Naive thymus-derived CD4-positive, alpha-beta T cell (primary cell): ENCODE measurements at regions of chr9 and their contacts with region 1.

Region 1: DNA sequence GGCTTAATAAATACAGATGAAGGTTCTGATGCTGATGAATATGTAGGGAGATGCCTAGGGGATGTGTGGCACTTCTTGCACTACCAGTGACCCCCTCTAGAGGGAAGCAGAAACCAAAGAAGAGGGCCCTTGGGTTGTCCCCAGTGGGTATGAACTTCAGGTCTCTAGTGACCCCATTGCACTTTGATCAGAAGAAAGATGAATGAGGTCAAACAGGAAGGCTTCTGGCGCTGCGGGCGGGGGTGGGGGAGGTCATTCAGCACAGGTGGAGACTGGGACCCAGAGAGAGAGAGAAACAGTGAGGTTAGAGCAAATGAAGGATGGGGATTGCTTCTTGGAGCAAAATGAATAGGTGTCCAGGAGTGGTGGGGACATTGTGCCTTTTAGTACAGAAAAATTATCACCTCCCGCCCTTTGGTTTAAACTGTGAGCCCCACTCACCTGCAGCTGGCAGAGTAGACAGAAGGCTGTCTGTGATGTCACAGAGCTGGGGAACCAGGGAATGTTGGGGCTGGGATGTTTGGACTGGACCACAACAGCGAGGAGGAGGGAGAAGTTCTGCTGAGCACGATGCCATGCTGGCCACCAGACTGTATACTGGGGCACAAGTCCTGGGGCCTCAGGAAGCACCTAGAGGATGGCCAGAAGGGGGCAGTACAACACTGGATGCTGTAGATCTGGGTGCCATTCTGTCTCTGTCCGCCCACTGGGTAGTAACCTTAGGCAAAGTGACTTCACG is at the start of gene TEX48:
- DNase-seq: peak; percentile 29 to 74 (median 62)
- ATAC-seq: peak; percentile 95
- H3K4me3 ChIP-seq: no peak within 1 kb of the TSS
- H3K4me3 Mint-ChIP-seq: peak within 1 kb of the TSS in 1 of 10 donors; percentile 56
- H3K27ac ChIP-seq: no peak within 1 kb of the TSS
- H3K27ac Mint-ChIP-seq: peak within 1 kb of the TSS in 1 of 9 donors; percentile 95
- H3K4me1 ChIP-seq: peaks cover 5 to 11% of the 10 kb centered on the region in 2 donors
- H3K4me1 Mint-ChIP-seq: peaks cover 0 to 58% (median 7%) of the 10 kb centered on the region in 7 donors
- H3K27me3 ChIP-seq: peaks cover 0 to 4% of the 10 kb centered on the region in 2 donors
- H3K27me3 Mint-ChIP-seq: peaks cover 0 to 20% (median 14%) of the 10 kb centered on the region in 5 donors
- total RNA-seq, gene TEX48: 0.85 TPM in 1 of 5 experiments, not detected in the others

Region 2: GRCh38 chr9:114629563-114630090 is 52.1 kb before region 1 on chr9:
- CTCF ChIA-PET with region 1: no interaction called
- POLR2A ChIA-PET with region 1: no interaction called
- intact Hi-C with region 1: no loop called
- DNase-seq: no peak
- ATAC-seq: no peak
- H3K4me3 ChIP-seq: no peak overlapping the region
- H3K4me3 Mint-ChIP-seq: no peak overlapping the region
- H3K27ac ChIP-seq: no peak overlapping the region
- H3K27ac Mint-ChIP-seq: peak overlapping the region in 1 of 9 donors; percentile 53
- H3K4me1 ChIP-seq: no peaks in the 10 kb centered on the region
- H3K4me1 Mint-ChIP-seq: peaks cover 0 to 5% (median 0%) of the 10 kb centered on the region in 7 donors
- H3K27me3 ChIP-seq: no peaks in the 10 kb centered on the region
- H3K27me3 Mint-ChIP-seq: no peaks in the 10 kb centered on the region

Region 3: DNA sequence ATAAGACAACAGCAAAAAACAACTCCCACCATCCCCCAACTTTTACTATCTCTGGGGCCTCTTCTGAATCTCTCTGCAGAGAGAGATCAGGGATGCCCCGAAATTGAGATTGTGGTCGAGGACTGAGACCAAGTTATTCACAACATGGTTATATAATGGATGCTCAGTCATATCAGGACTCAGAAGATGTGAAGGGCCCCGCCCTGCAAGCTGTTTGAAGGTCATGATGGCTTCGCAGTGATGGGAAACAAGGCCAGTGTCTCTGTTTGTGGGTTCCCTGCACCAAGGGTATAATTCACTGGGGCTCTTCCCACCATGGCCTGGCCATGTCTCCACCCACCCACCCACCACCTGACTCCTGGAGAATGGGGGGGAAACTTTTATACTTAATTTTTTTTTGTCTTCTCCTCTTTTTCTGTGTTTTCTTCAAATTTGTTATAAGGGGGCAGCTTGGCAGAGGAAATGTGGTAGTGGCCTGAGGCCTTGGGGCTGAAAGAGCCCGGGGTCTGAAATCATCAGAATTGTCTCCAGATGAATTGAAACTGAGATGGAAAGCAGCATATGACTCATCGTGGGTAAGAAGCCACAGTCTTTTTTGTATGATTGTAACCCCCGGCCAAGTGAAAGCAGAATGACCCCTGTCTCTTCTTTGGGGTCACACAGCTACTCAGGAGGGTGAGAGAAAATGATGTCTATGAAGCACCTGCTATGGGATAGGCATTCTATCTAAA is 15.2 kb after region 1 on chr9:
- CTCF ChIA-PET with region 1: interaction called, 7 read pairs
- POLR2A ChIA-PET with region 1: no interaction called
- intact Hi-C with region 1: loop called in 1 of 2 experiments (anchors 1 kb)
- DNase-seq: peak in 1 of 9 donors; percentile 67
- ATAC-seq: peak; percentile 37
- H3K4me3 ChIP-seq: no peak overlapping the region
- H3K4me3 Mint-ChIP-seq: peak overlapping the region in 1 of 10 donors; percentile 80
- H3K27ac ChIP-seq: no peak overlapping the region
- H3K27ac Mint-ChIP-seq: peak overlapping the region in 3 of 9 donors; percentile 27 to 99 (median 66)
- H3K4me1 ChIP-seq: peaks cover 0 to 17% of the 10 kb centered on the region in 2 donors
- H3K4me1 Mint-ChIP-seq: peaks cover 5 to 79% (median 9%) of the 10 kb centered on the region in 7 donors
- H3K27me3 ChIP-seq: no peaks in the 10 kb centered on the region
- H3K27me3 Mint-ChIP-seq: no peaks in the 10 kb centered on the region

Region 4: GRCh38 chr9:114718801-114719221 is 37.0 kb after region 1 on chr9:
- CTCF ChIA-PET with region 1: no interaction called
- POLR2A ChIA-PET with region 1: no interaction called
- intact Hi-C with region 1: loop called (anchors 1 kb)
- DNase-seq: peak in 5 of 9 donors; percentile 8 to 91 (median 18)
- ATAC-seq: peak; percentile 76
- H3K4me3 ChIP-seq: no peak overlapping the region
- H3K4me3 Mint-ChIP-seq: peak overlapping the region in 9 of 10 donors; percentile 0 to 75 (median 19)
- H3K27ac ChIP-seq: no peak overlapping the region
- H3K27ac Mint-ChIP-seq: peak overlapping the region in 6 of 9 donors; percentile 12 to 97 (median 64)
- H3K4me1 ChIP-seq: peaks cover 14 to 34% of the 10 kb centered on the region in 2 donors
- H3K4me1 Mint-ChIP-seq: peaks cover 10 to 88% (median 20%) of the 10 kb centered on the region in 7 donors
- H3K27me3 ChIP-seq: no peaks in the 10 kb centered on the region
- H3K27me3 Mint-ChIP-seq: no peaks in the 10 kb centered on the region

Region 5: GRCh38 chr9:114805670-114806525 is 124.1 kb after region 1 on chr9 and contains the start of gene TNFSF15:
- CTCF ChIA-PET with region 1: no interaction called
- POLR2A ChIA-PET with region 1: no interaction called
- intact Hi-C with region 1: loop called in 1 of 2 experiments (anchors 5 kb)
- DNase-seq: peak in 2 of 9 donors; percentile 0 to 49
- ATAC-seq: peak; percentile 67
- H3K4me3 ChIP-seq: no peak within 1 kb of the TSS
- H3K4me3 Mint-ChIP-seq: peak within 1 kb of the TSS; percentile 41 to 79 (median 68)
- H3K27ac ChIP-seq: no peak within 1 kb of the TSS
- H3K27ac Mint-ChIP-seq: peak within 1 kb of the TSS in 7 of 9 donors; percentile 26 to 83 (median 74)
- H3K4me1 ChIP-seq: peaks cover 11 to 17% of the 10 kb centered on the region in 2 donors
- H3K4me1 Mint-ChIP-seq: peaks cover 21 to 43% (median 25%) of the 10 kb centered on the region in 7 donors
- H3K27me3 ChIP-seq: no peaks in the 10 kb centered on the region
- H3K27me3 Mint-ChIP-seq: peaks cover 0 to 30% (median 0%) of the 10 kb centered on the region in 5 donors
- total RNA-seq, gene TNFSF15: 0.44 to 3.8 TPM in 2 of 5 experiments, not detected in the others

Region 6: DNA sequence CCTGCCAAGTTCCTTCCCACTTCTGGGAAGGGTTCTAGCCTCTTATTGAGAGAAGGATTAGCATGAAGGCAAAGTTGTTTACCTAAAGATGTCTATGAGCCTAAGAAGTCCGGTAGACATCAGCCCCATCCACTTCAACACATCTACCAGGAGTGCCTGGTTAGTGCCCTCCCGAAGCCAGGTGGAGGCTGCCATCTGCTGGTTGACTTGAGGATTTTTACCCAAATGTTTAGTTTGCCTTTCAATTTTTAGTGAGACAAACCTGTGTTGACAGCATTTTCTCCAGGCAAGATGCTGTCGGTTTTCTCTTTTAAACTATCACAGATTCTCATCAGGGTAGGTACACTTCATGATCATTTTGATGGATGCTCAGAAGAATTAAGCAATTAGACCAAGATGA is 332.2 kb after region 1 on chr9:
- CTCF ChIA-PET with region 1: interaction called, 25 read pairs
- POLR2A ChIA-PET with region 1: interaction called, 5 read pairs
- intact Hi-C with region 1: loop called (anchors 1 kb)
- DNase-seq: peak; percentile 57 to 84 (median 79)
- ATAC-seq: peak; percentile 88
- H3K4me3 ChIP-seq: no peak overlapping the region
- H3K4me3 Mint-ChIP-seq: peak overlapping the region in 1 of 10 donors; percentile 24
- H3K27ac ChIP-seq: no peak overlapping the region
- H3K27ac Mint-ChIP-seq: peak overlapping the region in 2 of 9 donors; percentile 12 to 79
- H3K4me1 ChIP-seq: peaks cover 0 to 4% of the 10 kb centered on the region in 2 donors
- H3K4me1 Mint-ChIP-seq: peaks cover 5 to 59% (median 12%) of the 10 kb centered on the region in 7 donors
- H3K27me3 ChIP-seq: no peaks in the 10 kb centered on the region
- H3K27me3 Mint-ChIP-seq: peaks cover 4 to 14% (median 7%) of the 10 kb centered on the region in 5 donors

Region 7: GRCh38 chr9:115524453-115525059 is 842.8 kb after region 1 on chr9:
- CTCF ChIA-PET with region 1: no interaction called
- POLR2A ChIA-PET with region 1: no interaction called
- intact Hi-C with region 1: loop called in 1 of 2 experiments (anchors 1 kb)
- DNase-seq: peak in 4 of 9 donors; percentile 4 to 16 (median 8)
- ATAC-seq: no peak
- H3K4me3 ChIP-seq: no peak overlapping the region
- H3K4me3 Mint-ChIP-seq: no peak overlapping the region
- H3K27ac ChIP-seq: no peak overlapping the region
- H3K27ac Mint-ChIP-seq: no peak overlapping the region
- H3K4me1 ChIP-seq: no peaks in the 10 kb centered on the region
- H3K4me1 Mint-ChIP-seq: no peaks in the 10 kb centered on the region
- H3K27me3 ChIP-seq: no peaks in the 10 kb centered on the region
- H3K27me3 Mint-ChIP-seq: peaks cover 12 to 35% (median 18%) of the 10 kb centered on the region in 5 donors

Region 8: GRCh38 chr9:116661037-116661954 is 1979.5 kb after region 1 on chr9:
- CTCF ChIA-PET with region 1: no interaction called
- POLR2A ChIA-PET with region 1: no interaction called
- intact Hi-C with region 1: loop called in 1 of 2 experiments (anchors 5 kb)
- DNase-seq: peak in 6 of 9 donors; percentile 3 to 39 (median 25)
- ATAC-seq: no peak
- H3K4me3 ChIP-seq: no peak overlapping the region
- H3K4me3 Mint-ChIP-seq: no peak overlapping the region
- H3K27ac ChIP-seq: no peak overlapping the region
- H3K27ac Mint-ChIP-seq: no peak overlapping the region
- H3K4me1 ChIP-seq: no peaks in the 10 kb centered on the region
- H3K4me1 Mint-ChIP-seq: no peaks in the 10 kb centered on the region
- H3K27me3 ChIP-seq: no peaks in the 10 kb centered on the region
- H3K27me3 Mint-ChIP-seq: no peaks in the 10 kb centered on the region